ENCODE measurements at regions of chr13 and their contacts with region 1.

Region 1: DNA sequence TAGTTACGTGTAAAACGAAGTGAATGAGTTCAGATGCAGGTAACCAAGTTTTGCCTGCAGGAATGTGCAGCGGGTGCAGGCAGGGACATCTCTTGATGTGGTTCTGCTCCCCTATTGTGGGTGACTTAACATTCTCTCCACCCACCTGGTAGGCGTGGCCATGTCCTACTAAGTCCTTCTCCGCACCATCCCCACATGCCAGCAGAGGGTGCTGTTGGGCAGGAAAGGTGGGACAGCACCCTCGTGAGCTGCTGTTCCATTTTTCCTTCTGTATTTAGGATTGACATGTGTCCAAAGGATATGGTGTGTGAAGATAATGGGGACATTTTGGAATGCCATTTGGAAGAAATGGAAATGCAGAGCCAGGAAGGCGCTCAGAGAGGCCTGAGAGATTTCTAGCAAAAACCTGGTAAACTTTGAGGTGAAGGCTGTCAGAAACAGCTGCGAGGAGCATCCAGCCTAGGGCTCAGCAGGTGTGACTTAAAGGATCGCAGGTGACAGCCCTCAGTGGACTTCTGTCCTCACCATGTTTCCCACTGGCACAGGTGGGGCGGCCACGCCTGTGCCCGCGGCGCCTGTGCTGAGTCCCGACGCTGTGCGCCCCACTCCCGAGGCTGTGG is 26.2 kb upstream of the MCF2L start:
- DNase-seq: peak; percentile 96
- ATAC-seq: peak; percentile 95
- H3K4me3 Mint-ChIP-seq: peak overlapping the region; percentile 65
- H3K27ac Mint-ChIP-seq: no peak overlapping the region
- H3K4me1 Mint-ChIP-seq: peaks cover 2% of the 10 kb centered on the region
- H3K27me3 Mint-ChIP-seq: peaks cover 33% of the 10 kb centered on the region

Region 2: GRCh38 chr13:112968908-112969691 is 26.3 kb after region 1 on chr13 and contains the start of gene MCF2L:
- CTCF ChIA-PET with region 1: interaction called, 11 read pairs
- DNase-seq: peak; percentile 68
- ATAC-seq: peak; percentile 77
- H3K4me3 Mint-ChIP-seq: peak within 1 kb of the TSS; percentile 85
- H3K27ac Mint-ChIP-seq: peak within 1 kb of the TSS; percentile 58
- H3K4me1 Mint-ChIP-seq: peaks cover 14% of the 10 kb centered on the region
- H3K27me3 Mint-ChIP-seq: peaks cover 24% of the 10 kb centered on the region
- total RNA-seq, gene MCF2L: 1.6 to 2.8 TPM

Region 3: GRCh38 chr13:113029487-113030258 is 86.9 kb after region 1 on chr13:
- CTCF ChIA-PET with region 1: interaction called, 38 read pairs
- DNase-seq: peak; percentile 61
- ATAC-seq: peak; percentile 42
- H3K4me3 Mint-ChIP-seq: no peak overlapping the region
- H3K27ac Mint-ChIP-seq: no peak overlapping the region
- H3K4me1 Mint-ChIP-seq: no peaks in the 10 kb centered on the region
- H3K27me3 Mint-ChIP-seq: no peaks in the 10 kb centered on the region

Region 4: GRCh38 chr13:113208424-113209335 is 265.9 kb after region 1 on chr13 and contains the start of gene PCID2:
- CTCF ChIA-PET with region 1: interaction called, 11 read pairs
- DNase-seq: peak; percentile 91
- ATAC-seq: peak; percentile 80
- H3K4me3 Mint-ChIP-seq: peak within 1 kb of the TSS; percentile 81
- H3K27ac Mint-ChIP-seq: peak within 1 kb of the TSS; percentile 88
- H3K4me1 Mint-ChIP-seq: peaks cover 66% of the 10 kb centered on the region
- H3K27me3 Mint-ChIP-seq: no peaks in the 10 kb centered on the region
- total RNA-seq, gene PCID2: 60.3 to 68.0 TPM

Region 5: DNA sequence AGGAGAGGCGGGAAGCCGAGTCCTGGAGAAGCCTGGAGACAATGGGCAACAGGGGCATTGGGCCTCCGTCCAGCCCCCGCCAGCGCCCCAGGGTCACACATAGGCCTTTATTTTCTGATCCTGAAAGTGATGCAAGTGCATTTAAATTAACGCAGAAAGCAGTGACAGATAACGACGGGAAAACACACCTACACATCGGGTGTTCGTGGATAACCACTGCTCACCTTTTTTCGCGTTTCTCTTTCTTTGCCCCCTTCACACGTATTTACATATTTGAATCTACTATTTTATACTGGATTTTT is 451.5 kb after region 1 on chr13:
- CTCF ChIA-PET with region 1: interaction called, 10 read pairs
- DNase-seq: no peak
- ATAC-seq: no peak
- H3K4me3 Mint-ChIP-seq: peak overlapping the region; percentile 22
- H3K27ac Mint-ChIP-seq: no peak overlapping the region
- H3K4me1 Mint-ChIP-seq: peaks cover 8% of the 10 kb centered on the region
- H3K27me3 Mint-ChIP-seq: peaks cover 8% of the 10 kb centered on the region

Measured in activated CD8-positive, alpha-beta memory T cell treated with anti-CD3 and anti-CD28 coated beads, Interleukin-2, amount 10 ng/mL, durations not matched to agents 7 days and 5 days (primary cell).